Left cardiac atrium (tissue), 4 donors: ENCODE measurements at regions of chr7 and their contacts with region 1.

Region 1: GRCh38 chr7:3673524-3673923 is 372.5 kb downstream of the SDK1 start:
- DNase-seq: no peak
- ATAC-seq: no peak

Region 2: GRCh38 chr7:3300651-3301378 is 372.7 kb before region 1 on chr7 and contains the start of gene SDK1:
- intact Hi-C with region 1: loop called in 1 of 2 experiments (anchors 10 kb)
- DNase-seq: peak; percentile 94
- ATAC-seq: peak; percentile 99
- total RNA-seq, gene SDK1: 2.0 to 2.8 TPM

Region 3: DNA sequence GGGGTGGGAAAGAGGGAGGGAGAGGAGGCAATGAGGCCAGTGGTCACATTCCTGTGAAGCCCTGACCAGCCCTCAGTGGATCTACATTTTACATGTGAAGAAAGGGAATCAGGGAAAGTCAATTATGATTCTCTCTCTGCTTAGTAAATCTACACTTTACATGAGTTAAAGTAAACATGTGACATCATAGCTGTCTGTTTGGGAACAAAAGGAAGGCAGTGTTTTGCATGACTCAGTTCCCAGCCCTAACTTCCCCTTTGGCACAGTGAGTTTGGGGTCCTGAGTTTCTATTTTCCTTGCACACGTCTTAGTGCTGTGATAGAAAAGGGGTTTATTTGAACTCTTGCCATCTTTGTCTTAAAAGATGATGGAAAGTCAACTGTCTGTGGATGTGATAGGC is 242.6 kb after region 1 on chr7:
- intact Hi-C with region 1: no loop called
- DNase-seq: no peak
- ATAC-seq: no peak